WTC11 (cell line): ENCODE measurements at regions of chr1 and their contacts with region 1.

Region 1: DNA sequence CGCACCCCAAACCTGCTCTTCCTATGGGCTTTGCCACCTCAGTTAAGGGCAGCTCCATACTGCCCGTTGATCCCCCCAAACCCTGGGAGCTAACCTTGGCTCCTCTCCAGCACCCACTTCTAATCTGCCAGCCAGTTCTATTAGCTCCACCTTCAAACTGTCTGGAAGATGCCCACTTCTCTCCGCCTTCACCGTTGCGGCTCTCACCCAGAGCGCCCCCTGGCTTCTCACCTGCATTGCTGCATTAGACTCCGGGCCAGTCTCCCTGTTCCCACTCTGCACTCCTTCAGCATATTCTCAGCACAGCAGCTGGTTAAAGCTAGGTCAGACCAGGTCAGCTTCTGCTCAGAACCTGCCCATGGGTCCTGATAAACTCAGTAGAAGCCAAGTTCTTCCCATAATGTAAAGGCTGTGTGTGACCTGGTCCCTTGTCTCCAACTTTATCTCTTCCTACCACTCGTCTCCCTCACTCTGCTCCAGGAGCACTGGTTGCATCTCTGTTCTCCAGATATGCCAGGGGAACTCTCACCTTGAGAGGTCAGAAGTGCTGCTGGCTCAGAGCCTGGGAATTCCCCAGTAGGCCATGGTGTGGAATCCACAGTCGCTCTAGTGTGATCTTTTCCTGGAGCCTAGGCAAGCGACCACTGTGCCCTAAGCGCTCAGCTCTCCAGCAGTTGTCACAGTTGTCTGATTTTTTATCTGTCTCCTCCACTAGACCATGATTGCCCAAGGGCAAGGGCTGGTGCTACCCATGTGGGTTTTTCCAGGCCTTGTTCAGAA is 150.3 kb downstream of the HMGB4 start:
- DNase-seq: peak; percentile 81
- ATAC-seq: peak; percentile 96
- H3K4me3 Mint-ChIP-seq: no peak overlapping the region
- H3K27ac Mint-ChIP-seq: no peak overlapping the region
- H3K4me1 Mint-ChIP-seq: peaks cover 7% of the 10 kb centered on the region
- H3K27me3 Mint-ChIP-seq: no peaks in the 10 kb centered on the region
- CTCF ChIP-seq: peak; percentile 85

Region 2: GRCh38 chr1:33792651-33793050 is 221.5 kb before region 1 on chr1:
- CTCF ChIA-PET with region 1: no interaction called
- POLR2A ChIA-PET with region 1: no interaction called
- DNase-seq: no peak
- ATAC-seq: no peak
- H3K4me3 Mint-ChIP-seq: no peak overlapping the region
- H3K27ac Mint-ChIP-seq: no peak overlapping the region
- H3K4me1 Mint-ChIP-seq: peaks cover 4% of the 10 kb centered on the region
- H3K27me3 Mint-ChIP-seq: no peaks in the 10 kb centered on the region
- CTCF ChIP-seq: no peak

Region 3: DNA sequence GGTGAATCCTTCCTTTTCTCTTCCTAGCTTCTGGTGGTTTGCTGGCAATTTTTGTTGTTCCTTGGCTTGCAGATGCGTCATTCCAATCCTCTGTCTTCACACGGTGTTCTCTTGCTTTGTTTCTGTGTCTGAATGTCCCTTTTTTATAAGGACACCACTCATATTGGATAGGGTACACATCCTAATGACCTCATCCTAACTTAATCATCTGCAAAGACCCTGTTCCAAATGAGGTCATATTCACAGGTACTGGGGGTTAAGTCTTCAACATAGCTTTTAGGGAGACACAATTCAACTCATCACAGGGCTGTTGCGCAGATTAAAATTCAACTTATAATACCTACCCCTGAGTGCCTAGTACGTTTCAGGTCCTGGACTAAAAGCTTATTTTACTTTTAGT is 74.1 kb before region 1 on chr1:
- CTCF ChIA-PET with region 1: no interaction called
- POLR2A ChIA-PET with region 1: no interaction called
- DNase-seq: no peak
- ATAC-seq: no peak
- H3K4me3 Mint-ChIP-seq: no peak overlapping the region
- H3K27ac Mint-ChIP-seq: no peak overlapping the region
- H3K4me1 Mint-ChIP-seq: no peaks in the 10 kb centered on the region
- H3K27me3 Mint-ChIP-seq: no peaks in the 10 kb centered on the region
- CTCF ChIP-seq: no peak

Region 4: DNA sequence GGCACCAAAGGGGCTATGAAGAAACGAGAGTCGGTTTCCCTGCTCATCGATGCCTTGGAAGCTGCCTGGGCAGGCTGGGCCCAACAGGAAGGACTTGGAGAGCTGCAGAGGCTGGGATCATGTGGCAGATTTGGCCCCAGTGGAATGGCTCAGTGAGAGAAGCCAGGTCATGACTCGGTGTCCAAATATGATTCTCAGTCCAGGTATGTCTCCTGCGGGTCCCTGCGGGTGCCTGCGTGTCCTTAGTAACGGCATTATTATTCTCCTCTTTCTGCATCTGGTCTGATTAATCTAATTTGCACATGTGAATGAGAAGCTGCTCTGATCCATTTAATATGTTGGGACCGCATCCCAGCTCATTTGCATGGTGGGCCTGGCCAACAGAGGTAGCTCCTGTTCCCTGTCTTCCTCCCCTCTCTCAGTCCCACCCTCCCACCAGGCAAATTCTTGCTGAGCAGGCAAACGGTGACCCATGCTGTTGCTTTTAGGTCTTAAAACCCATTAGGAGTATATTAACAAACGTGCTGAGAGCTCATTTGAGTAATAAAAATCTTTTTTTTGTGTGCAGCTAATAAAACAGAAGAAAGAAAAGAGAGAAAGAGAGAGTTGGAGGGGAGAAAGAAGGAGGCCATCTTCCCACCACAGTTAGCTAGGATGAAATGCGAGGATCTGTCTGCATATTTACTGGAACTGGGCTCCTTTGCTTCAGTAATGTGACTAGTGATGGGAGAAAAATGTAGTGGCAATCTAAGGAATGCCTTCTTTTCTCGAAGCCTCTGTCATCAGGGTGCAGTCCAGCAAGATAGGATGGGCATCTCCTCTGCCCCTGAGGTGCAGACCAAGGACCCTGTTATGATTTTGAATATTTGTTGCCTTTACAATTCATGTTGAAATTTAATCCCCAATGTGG is 16.8 kb before region 1 on chr1:
- CTCF ChIA-PET with region 1: interaction called, 50 read pairs
- POLR2A ChIA-PET with region 1: no interaction called
- DNase-seq: no peak
- ATAC-seq: peak; percentile 38; the same call in 1 of the 2 replicates
- H3K4me3 Mint-ChIP-seq: no peak overlapping the region
- H3K27ac Mint-ChIP-seq: no peak overlapping the region
- H3K4me1 Mint-ChIP-seq: peaks cover 13% of the 10 kb centered on the region
- H3K27me3 Mint-ChIP-seq: no peaks in the 10 kb centered on the region
- CTCF ChIP-seq: no peak

Region 5: DNA sequence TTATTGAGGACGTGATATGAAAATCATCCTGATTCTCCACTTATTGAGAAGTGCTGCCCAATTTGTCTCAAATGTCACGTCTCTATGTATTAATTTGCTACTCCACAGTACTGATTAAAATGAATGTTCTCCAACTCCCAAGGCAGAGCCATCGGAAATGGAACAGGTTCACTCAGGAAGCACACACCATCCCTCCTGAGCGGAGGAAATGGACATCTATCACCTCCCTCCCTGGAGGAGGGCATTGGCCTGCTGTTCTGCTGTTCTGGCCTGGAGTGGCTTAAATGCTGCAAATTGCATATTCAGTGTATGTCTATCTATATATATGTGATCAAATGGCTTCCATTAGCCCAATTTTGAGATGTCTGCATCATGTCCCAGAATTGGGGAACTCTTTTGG is 10.3 kb after region 1 on chr1:
- CTCF ChIA-PET with region 1: interaction called, 21 read pairs
- POLR2A ChIA-PET with region 1: no interaction called
- DNase-seq: no peak
- ATAC-seq: no peak
- H3K4me3 Mint-ChIP-seq: no peak overlapping the region
- H3K27ac Mint-ChIP-seq: no peak overlapping the region
- H3K4me1 Mint-ChIP-seq: peaks cover 17% of the 10 kb centered on the region
- H3K27me3 Mint-ChIP-seq: no peaks in the 10 kb centered on the region
- CTCF ChIP-seq: no peak

Region 6: GRCh38 chr1:34037109-34037508 is 23.0 kb after region 1 on chr1:
- CTCF ChIA-PET with region 1: interaction called, 20 read pairs
- POLR2A ChIA-PET with region 1: no interaction called
- DNase-seq: peak; percentile 73
- ATAC-seq: peak; percentile 92
- H3K4me3 Mint-ChIP-seq: no peak overlapping the region
- H3K27ac Mint-ChIP-seq: no peak overlapping the region
- H3K4me1 Mint-ChIP-seq: peaks cover 4% of the 10 kb centered on the region
- H3K27me3 Mint-ChIP-seq: no peaks in the 10 kb centered on the region
- CTCF ChIP-seq: no peak

Region 7: DNA sequence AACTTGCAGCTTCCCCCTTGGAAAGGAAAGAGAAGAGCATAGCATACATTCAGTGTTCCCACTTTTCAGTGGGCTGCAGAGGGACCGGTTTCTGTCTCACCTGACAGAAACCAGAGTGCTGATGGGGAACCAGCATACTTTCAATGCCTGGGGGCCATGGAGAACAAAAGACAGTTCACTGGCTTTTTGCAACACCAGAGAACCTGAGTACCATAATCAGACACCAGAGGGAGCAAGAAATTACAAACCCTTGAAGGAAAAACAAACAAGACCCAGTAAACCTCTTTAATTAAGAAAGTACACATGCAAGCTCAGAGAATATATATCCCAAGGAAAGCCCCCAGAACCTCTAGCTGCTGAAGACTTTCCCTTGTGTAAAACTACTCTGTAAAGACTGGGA is 99.7 kb after region 1 on chr1:
- CTCF ChIA-PET with region 1: interaction called, 16 read pairs
- POLR2A ChIA-PET with region 1: no interaction called
- DNase-seq: peak; percentile 35
- ATAC-seq: peak; percentile 86
- H3K4me3 Mint-ChIP-seq: no peak overlapping the region
- H3K27ac Mint-ChIP-seq: peak overlapping the region; percentile 89
- H3K4me1 Mint-ChIP-seq: peaks cover 23% of the 10 kb centered on the region
- H3K27me3 Mint-ChIP-seq: no peaks in the 10 kb centered on the region
- CTCF ChIP-seq: peak; percentile 52; the same call in 1 of the 2 replicates